ENCODE measurements at regions of chr12 and their contacts with region 1.

Region 1: GRCh38 chr12:123075646-123076171 is 75.2 kb downstream of the PITPNM2 start:
- DNase-seq: peak; percentile 72 to 81
- H3K4me3 ChIP-seq: no peak overlapping the region
- H3K27ac ChIP-seq: 0 out of 2 replicates have a peak overlapping the region, but pooled peaks have one; percentile 19
- H3K4me1 ChIP-seq: peaks cover 36% of the 10 kb centered on the region
- H3K27me3 ChIP-seq: no peaks in the 10 kb centered on the region
- CTCF ChIP-seq: no peak

Region 2: GRCh38 chr12:121748571-121749253 is 1327.0 kb before region 1 on chr12:
- CTCF ChIA-PET with region 1: no interaction called
- POLR2A ChIA-PET with region 1: no interaction called
- intact Hi-C with region 1: no loop called
- DNase-seq: peak; percentile 64 to 66
- H3K4me3 ChIP-seq: no peak overlapping the region
- H3K27ac ChIP-seq: peak overlapping the region; percentile 38
- H3K4me1 ChIP-seq: 0 out of 2 replicates have a peak, but pooled peaks cover 5% of the 10 kb centered on the region
- H3K27me3 ChIP-seq: no peaks in the 10 kb centered on the region
- CTCF ChIP-seq: no peak

Region 3: GRCh38 chr12:123056053-123056741 is 19.5 kb before region 1 on chr12:
- CTCF ChIA-PET with region 1: no interaction called
- POLR2A ChIA-PET with region 1: interaction called, 4 read pairs
- intact Hi-C with region 1: loop called (anchors 2 kb)
- DNase-seq: peak; percentile 60 to 80
- H3K4me3 ChIP-seq: no peak overlapping the region
- H3K27ac ChIP-seq: no peak overlapping the region
- H3K4me1 ChIP-seq: peaks cover 18% of the 10 kb centered on the region
- H3K27me3 ChIP-seq: no peaks in the 10 kb centered on the region
- CTCF ChIP-seq: no peak

Region 4: GRCh38 chr12:123150744-123151456 is 75.2 kb after region 1 on chr12 and contains the start of gene PITPNM2:
- CTCF ChIA-PET with region 1: no interaction called
- POLR2A ChIA-PET with region 1: no interaction called
- intact Hi-C with region 1: loop called (anchors 2 kb)
- DNase-seq: peak in 1 of 2 experiments; percentile 57
- H3K4me3 ChIP-seq: peak within 1 kb of the TSS; percentile 88
- H3K27ac ChIP-seq: 0 out of 2 replicates have a peak within 1 kb of the TSS, but pooled peaks have one; percentile 20
- H3K4me1 ChIP-seq: peaks cover 19% of the 10 kb centered on the region
- H3K27me3 ChIP-seq: no peaks in the 10 kb centered on the region
- CTCF ChIP-seq: no peak
- total RNA-seq, gene PITPNM2: 16.6 and 21.6 TPM in 2 replicates

Region 5: DNA sequence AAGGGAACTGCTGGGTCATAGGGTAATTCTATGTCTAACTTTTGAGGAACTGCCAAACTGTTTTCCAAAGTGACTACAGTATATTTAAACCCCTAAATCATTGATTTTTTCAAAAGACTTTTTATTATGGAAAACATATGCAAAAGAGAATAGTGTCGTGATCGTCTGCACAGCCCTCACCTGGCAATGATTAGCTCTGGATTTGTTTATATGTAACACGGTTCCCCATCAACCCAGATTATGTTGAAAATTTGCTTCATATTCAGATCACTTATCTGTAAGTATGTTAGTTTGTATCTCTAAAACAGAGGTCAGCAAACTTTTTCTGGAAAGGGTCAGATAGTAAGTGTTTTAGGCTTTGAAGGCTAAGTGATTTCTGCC is 844.3 kb after region 1 on chr12:
- CTCF ChIA-PET with region 1: no interaction called
- POLR2A ChIA-PET with region 1: no interaction called
- intact Hi-C with region 1: no loop called
- DNase-seq: no peak
- H3K4me3 ChIP-seq: no peak overlapping the region
- H3K27ac ChIP-seq: no peak overlapping the region
- H3K4me1 ChIP-seq: no peaks in the 10 kb centered on the region
- H3K27me3 ChIP-seq: peaks cover 70% of the 10 kb centered on the region
- CTCF ChIP-seq: no peak